Panc1 (cell line): ENCODE measurements at regions of chr4 and their contacts with region 1.

Region 1: GRCh38 chr4:10478621-10479020 is 21.4 kb upstream of the ZNF518B start:
- DNase-seq: no peak
- ATAC-seq: no peak
- H3K4me3 ChIP-seq: no peak overlapping the region
- H3K27ac ChIP-seq: no peak overlapping the region
- H3K4me1 ChIP-seq: no peaks in the 10 kb centered on the region
- H3K27me3 ChIP-seq: no peaks in the 10 kb centered on the region
- CTCF ChIP-seq: no peak

Region 2: GRCh38 chr4:10461091-10461849 is 17.4 kb before region 1 on chr4:
- CTCF ChIA-PET with region 1: interaction called, 12 read pairs
- POLR2A ChIA-PET with region 1: no interaction called
- in situ Hi-C with region 1: no loop called
- intact Hi-C with region 1: no loop called
- DNase-seq: peak; percentile 7
- ATAC-seq: no peak
- H3K4me3 ChIP-seq: no peak overlapping the region
- H3K27ac ChIP-seq: no peak overlapping the region
- H3K4me1 ChIP-seq: no peaks in the 10 kb centered on the region
- H3K27me3 ChIP-seq: no peaks in the 10 kb centered on the region
- CTCF ChIP-seq: peak; percentile 40